ENCODE measurements at regions of chr5 and their contacts with region 1.

Region 1: DNA sequence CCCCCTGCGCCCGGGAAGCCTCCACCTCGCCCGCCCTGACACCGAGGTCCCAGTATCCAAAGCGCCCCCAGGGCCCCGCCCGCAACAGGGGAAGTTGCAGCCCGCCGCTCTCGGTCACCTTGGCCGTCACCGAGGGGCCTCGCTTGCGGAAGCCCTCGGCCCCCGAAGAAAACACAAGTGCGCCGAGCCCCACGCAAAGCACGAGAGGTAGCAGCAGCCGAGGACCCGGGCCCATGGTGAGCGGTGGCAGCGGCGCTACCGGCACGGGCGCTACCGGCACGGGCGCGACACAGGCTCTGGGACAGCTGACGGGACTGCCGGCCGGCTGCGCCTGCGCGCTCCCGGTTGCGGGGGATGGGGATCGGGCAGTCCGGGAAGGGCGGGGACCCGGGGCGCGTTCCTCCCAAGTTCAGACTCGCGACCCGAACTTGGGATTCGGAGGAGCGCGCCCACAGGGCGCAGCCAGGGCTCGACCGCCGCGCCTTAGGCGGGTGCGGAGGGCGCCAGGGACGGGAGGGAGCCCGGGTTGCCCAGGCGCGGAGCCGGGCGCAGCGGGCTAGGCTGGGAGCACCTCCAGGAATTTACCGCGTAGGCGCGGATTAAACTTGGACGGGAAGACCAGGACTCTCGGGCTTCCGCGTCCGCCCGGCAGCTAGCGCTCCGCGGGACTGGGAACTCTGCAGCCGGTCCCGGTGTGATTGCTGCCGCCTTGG is at the start of gene PPIC:
- DNase-seq: peak; percentile 95
- H3K4me3 ChIP-seq: peak within 1 kb of the TSS; percentile 64 to 88 (median 86)
- H3K27ac ChIP-seq: peak within 1 kb of the TSS; percentile 93 to 96 (median 94)
- H3K4me1 ChIP-seq: peaks cover 0 to 32% (median 25%) of the 10 kb centered on the region in 4 donors
- H3K27me3 ChIP-seq: no peaks in the 10 kb centered on the region
- CTCF ChIP-seq: no peak
- EP300 ChIP-seq: no peak
- POLR2A ChIP-seq: peak; percentile 48 to 74
- total RNA-seq, gene PPIC: 26.5 to 79.2 (median 58.4) TPM

Region 2: DNA sequence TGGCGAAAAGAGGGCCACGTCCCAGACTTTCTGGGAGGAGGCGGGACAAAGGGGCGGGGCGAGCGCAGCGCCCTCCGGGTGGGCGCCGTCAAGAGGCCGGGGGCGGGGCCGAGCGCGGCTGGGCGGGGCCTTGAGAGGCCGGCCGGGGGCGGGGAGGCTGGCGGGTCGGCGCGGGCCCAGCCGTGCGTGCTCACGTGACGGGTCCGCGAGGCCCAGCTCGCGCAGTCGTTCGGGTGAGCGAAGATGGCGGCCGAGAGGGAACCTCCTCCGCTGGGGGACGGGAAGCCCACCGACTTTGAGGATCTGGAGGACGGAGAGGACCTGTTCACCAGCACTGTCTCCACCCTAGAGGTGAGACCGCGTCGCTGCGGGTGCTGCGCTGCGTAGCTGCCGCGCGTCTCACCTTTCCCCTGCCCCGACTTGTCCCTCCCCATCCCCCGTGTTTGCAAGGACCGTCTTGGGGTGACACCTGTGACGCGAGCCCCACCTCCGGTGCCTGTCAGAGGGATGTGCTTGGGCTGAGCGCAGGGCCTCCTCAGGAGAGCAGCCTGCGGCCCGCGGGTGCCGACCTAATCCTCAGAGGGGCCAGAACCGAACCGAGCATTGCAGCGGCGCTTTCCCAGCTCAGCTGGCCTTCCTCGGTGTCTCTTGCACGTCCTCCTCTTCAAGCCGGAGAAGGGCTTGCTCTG is 261.5 kb before region 1 on chr5 and contains the start of gene SNX2:
- intact Hi-C with region 1: loop called (anchors 5 kb)
- DNase-seq: peak; percentile 96
- H3K4me3 ChIP-seq: peak within 1 kb of the TSS; percentile 68 to 94 (median 86)
- H3K27ac ChIP-seq: peak within 1 kb of the TSS; percentile 80 to 94 (median 88)
- H3K4me1 ChIP-seq: peaks cover 0 to 34% (median 19%) of the 10 kb centered on the region in 4 donors
- H3K27me3 ChIP-seq: no peaks in the 10 kb centered on the region
- CTCF ChIP-seq: peak in 1 of 4 experiments; percentile 20
- EP300 ChIP-seq: no peak
- POLR2A ChIP-seq: peak; percentile 61 to 65
- total RNA-seq, gene SNX2: 50.2 to 111 (median 82.3) TPM

Region 3: DNA sequence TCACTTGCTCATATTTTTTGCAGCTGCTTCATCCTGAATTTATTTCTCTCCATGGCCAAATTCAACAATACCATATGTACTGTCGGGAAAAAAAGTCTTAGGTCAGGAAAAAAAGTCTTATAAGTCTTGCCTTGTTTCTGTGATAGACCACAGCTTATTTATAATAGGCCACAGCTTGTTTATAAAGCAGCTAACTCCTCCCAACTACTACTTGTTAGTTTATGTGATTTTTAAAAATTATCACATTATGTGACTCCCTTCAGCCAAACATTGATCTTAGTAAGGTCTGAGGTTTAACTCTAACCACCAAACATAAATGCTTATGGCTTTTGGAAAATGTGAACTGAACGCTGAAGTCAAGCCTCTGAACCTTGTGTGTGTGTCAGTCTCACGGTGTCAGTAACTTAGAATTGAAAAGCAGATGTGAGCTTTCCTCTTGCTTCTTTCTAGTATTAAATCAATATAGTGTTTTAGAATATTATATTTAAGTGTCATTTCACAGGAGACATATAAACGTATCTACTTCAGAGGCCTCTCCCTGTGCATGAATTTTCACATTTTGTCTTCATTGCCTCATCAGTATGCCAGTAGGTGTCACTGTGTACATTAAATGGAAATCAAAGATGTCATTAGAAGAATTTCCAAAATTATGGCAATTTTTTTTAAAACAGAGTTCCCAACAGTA is 139.8 kb before region 1 on chr5:
- intact Hi-C with region 1: loop called (anchors 5 kb)
- DNase-seq: no peak
- H3K4me3 ChIP-seq: no peak overlapping the region
- H3K27ac ChIP-seq: no peak overlapping the region
- H3K4me1 ChIP-seq: peaks cover 0 to 7% (median 3%) of the 10 kb centered on the region in 4 donors
- H3K27me3 ChIP-seq: no peaks in the 10 kb centered on the region
- CTCF ChIP-seq: peak in 3 of 4 experiments; percentile 26 to 63 (median 55)
- EP300 ChIP-seq: no peak
- POLR2A ChIP-seq: no peak

Region 4: GRCh38 chr5:122997294-122997693 is 39.3 kb before region 1 on chr5:
- intact Hi-C with region 1: no loop called
- DNase-seq: no peak
- H3K4me3 ChIP-seq: no peak overlapping the region
- H3K27ac ChIP-seq: no peak overlapping the region
- H3K4me1 ChIP-seq: no peaks in the 10 kb centered on the region
- H3K27me3 ChIP-seq: no peaks in the 10 kb centered on the region
- CTCF ChIP-seq: no peak
- EP300 ChIP-seq: no peak
- POLR2A ChIP-seq: no peak

Region 5: GRCh38 chr5:123157791-123158581 is 121.4 kb after region 1 on chr5:
- intact Hi-C with region 1: loop called (anchors 5 kb)
- DNase-seq: no peak
- H3K4me3 ChIP-seq: peak overlapping the region in 1 of 4 donors; percentile 4
- H3K27ac ChIP-seq: peak overlapping the region; percentile 16 to 84 (median 80)
- H3K4me1 ChIP-seq: peaks cover 3 to 51% (median 43%) of the 10 kb centered on the region in 4 donors
- H3K27me3 ChIP-seq: no peaks in the 10 kb centered on the region
- CTCF ChIP-seq: no peak
- EP300 ChIP-seq: no peak
- POLR2A ChIP-seq: no peak

Region 6: DNA sequence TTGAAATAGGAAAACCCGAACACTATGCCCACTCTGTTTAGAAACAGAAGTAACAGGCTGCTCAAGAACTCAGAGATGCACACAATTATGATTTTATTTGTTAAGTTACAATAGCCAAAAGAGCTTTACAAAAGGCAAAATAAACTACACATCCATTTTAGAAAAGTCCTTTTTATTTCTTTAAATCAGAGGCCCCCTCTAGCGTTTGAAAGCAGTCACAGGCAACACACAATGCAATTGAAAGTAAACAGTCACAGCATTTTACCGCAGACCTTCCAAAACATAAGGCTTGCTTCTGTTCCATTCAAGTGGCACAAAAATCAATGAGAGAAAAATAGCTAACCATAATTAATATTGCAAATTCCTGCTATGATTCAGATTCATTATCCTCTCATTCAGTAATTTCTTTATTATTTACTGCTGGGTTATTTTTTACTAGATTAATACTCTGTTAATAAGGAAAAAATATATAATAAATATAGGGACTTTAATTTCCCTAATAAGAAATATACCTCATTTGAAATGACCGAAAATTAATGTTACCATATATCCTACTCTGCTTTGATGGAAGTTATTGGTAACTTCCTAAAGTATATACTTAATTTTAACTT is 308.4 kb after region 1 on chr5:
- intact Hi-C with region 1: loop called (anchors 5 kb)
- DNase-seq: no peak
- H3K4me3 ChIP-seq: no peak overlapping the region
- H3K27ac ChIP-seq: no peak overlapping the region
- H3K4me1 ChIP-seq: peaks cover 0 to 19% (median 4%) of the 10 kb centered on the region in 4 donors
- H3K27me3 ChIP-seq: no peaks in the 10 kb centered on the region
- CTCF ChIP-seq: peak; percentile 57 to 74 (median 67)
- EP300 ChIP-seq: no peak
- POLR2A ChIP-seq: no peak

Region 7: DNA sequence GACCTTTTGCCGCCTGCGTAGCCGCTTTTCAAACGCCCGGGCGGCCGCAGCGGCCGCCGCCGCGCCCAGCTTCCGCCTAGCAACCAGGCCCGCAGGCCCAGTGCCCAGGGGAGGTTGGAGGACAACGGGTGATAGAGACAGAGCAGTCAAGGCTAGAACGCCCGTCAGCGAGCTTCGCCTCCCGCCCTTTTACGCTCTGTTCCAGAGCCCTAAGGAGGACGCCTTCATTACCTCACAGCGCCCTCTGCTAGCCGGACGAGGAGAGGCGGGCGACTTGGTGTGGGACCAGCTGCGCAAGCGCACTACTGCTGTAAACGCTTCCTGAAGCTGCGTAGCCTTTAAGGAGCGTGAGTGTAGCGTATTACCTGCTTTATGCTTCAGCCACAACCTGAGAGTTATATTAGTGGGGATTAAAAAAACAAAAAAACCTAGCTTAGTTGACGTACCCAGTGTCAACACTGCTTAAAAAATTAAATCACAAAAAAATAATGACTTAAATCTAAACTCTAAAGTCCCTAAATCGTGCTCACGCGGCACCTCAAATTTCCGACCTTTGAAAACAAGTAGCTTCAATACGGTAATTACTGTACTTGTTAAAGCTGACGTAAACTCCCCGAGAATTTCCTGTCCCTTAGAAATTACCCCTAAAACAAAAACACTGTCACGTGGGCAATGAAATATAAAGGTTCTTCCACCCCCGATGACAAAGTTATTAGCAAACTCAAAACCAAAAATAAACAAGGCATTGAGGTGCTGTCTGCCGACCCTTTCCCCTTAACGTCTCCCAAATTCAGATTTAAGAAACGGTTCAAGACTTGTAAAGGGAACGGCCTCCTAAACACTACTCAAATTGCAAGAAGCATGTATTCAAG is 387.0 kb after region 1 on chr5 and contains the start of gene CEP120:
- intact Hi-C with region 1: loop called (anchors 5 kb)
- DNase-seq: peak; percentile 99
- H3K4me3 ChIP-seq: peak within 1 kb of the TSS; percentile 88 to 95 (median 94)
- H3K27ac ChIP-seq: peak within 1 kb of the TSS; percentile 90 to 97 (median 94)
- H3K4me1 ChIP-seq: peaks cover 0 to 26% (median 19%) of the 10 kb centered on the region in 4 donors
- H3K27me3 ChIP-seq: no peaks in the 10 kb centered on the region
- CTCF ChIP-seq: peak in 3 of 4 experiments; percentile 68 to 69 (median 68)
- EP300 ChIP-seq: no peak
- POLR2A ChIP-seq: peak; percentile 75 to 77
- total RNA-seq, gene CEP120: 18.6 to 23.5 (median 21.9) TPM